Activated T-helper 1 cell treated with anti-CD3 and anti-CD28 coated beads, Interleukin-12 subunit alpha, Interleukin-12 subunit beta, Interleukin-2, Interleukin-4 antibody, amounts not matched to agents 30 ng/mL and 10 ng/mL and 1 ng/mL, durations not matched to agents 14 hours and 24 hours and 36 hours (primary cell): ENCODE measurements at regions of chr1 and their contacts with region 1.

Region 1: GRCh38 chr1:205255941-205256780 is 28.4 kb downstream of the TMCC2 start:
- DNase-seq: peak; percentile 74
- H3K4me3 Mint-ChIP-seq: no peak overlapping the region
- H3K27ac Mint-ChIP-seq: no peak overlapping the region
- H3K4me1 Mint-ChIP-seq: peaks cover 25% of the 10 kb centered on the region
- H3K27me3 Mint-ChIP-seq: no peaks in the 10 kb centered on the region

Region 2: DNA sequence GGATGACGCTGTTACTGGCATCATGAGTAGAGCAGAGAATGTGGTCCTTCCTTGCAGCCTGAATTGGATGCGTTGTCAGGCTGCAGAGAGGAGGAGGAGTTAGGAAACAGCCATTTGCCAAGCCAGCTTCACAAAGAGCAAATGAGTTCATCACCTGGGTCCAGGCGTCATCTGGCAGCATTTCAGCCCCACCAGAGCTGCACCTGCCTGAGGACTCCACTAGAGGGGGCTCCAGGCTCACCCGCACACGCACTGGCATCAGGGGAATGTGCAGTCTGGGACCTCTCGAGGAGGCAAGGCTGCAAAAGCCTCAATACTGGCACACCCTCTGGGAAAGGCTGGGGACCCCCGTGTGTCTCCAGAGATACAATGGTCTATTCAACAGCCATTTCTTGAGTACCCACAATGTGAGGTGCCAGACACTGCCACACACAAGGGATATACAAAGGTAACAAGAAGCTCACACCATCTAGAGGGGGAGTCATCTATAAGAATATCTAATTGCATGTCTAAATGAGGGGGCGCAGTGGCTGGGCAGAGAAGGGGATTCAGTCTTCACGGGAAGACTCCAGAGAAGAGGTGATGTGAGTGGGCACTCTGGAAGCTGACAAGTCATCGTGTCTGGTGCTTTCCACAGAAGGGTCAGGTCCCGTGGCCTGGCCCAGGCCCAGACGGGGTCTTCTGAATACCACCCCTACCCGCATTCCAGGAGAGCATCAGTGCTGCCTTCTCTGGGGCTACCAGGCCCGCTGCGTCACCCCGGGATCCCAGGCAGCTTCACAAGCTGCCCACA is 266.7 kb before region 1 on chr1:
- intact Hi-C with region 1: loop called (anchors 1 kb)
- DNase-seq: peak; percentile 44
- H3K4me3 Mint-ChIP-seq: no peak overlapping the region
- H3K27ac Mint-ChIP-seq: no peak overlapping the region
- H3K4me1 Mint-ChIP-seq: peaks cover 11% of the 10 kb centered on the region
- H3K27me3 Mint-ChIP-seq: peaks cover 2% of the 10 kb centered on the region

Region 3: DNA sequence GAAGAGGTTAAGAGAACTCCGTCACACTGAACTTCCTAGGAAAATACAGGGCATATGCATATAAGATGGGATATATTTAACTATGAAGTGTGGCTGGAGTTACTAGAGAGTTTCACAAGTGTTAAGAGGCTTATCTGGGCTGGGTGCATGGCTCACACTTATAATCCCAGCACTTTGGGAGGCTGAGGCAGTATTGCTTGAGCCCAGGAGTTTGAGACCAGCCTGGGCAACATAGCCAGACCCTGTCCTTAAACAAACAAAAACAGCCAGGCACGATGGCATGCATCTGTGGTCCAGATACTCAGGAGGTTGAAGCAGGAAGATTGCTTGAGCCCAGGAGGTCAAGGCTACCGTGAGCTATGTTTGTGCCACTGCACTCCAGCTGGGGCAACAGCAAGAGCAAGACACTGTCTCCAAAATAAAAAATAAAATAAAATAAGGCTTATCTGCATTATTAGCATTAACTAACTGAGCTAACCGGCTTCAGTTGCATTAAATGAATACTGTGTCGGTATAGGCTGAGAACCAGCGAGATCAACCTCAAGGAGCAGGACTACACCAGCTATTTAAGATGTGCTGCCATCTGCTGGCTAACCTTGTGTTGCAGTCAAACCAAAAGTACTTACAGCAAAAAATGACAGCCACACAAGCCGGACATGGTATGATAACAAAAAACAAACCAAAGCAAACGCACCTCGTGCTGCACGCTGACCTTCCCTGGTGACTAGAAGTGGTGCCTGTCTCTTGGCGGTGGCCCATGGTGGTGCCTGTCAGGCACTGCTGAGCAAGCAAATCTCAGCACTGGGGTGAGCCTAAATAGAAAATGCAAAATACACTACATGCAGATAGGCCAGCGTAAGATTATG is 114.7 kb before region 1 on chr1:
- intact Hi-C with region 1: loop called (anchors 1 kb)
- DNase-seq: peak; percentile 59
- H3K4me3 Mint-ChIP-seq: no peak overlapping the region
- H3K27ac Mint-ChIP-seq: no peak overlapping the region
- H3K4me1 Mint-ChIP-seq: peaks cover 9% of the 10 kb centered on the region
- H3K27me3 Mint-ChIP-seq: no peaks in the 10 kb centered on the region

Region 4: GRCh38 chr1:205211169-205211838 is 44.9 kb before region 1 on chr1 and contains the start of gene DSTYK:
- intact Hi-C with region 1: loop called (anchors 5 kb)
- DNase-seq: peak; percentile 89
- H3K4me3 Mint-ChIP-seq: peak within 1 kb of the TSS; percentile 99
- H3K27ac Mint-ChIP-seq: peak within 1 kb of the TSS; percentile 94
- H3K4me1 Mint-ChIP-seq: peaks cover 49% of the 10 kb centered on the region
- H3K27me3 Mint-ChIP-seq: no peaks in the 10 kb centered on the region
- total RNA-seq, gene DSTYK: 34.2 and 35.9 TPM in 2 replicates

Region 5: DNA sequence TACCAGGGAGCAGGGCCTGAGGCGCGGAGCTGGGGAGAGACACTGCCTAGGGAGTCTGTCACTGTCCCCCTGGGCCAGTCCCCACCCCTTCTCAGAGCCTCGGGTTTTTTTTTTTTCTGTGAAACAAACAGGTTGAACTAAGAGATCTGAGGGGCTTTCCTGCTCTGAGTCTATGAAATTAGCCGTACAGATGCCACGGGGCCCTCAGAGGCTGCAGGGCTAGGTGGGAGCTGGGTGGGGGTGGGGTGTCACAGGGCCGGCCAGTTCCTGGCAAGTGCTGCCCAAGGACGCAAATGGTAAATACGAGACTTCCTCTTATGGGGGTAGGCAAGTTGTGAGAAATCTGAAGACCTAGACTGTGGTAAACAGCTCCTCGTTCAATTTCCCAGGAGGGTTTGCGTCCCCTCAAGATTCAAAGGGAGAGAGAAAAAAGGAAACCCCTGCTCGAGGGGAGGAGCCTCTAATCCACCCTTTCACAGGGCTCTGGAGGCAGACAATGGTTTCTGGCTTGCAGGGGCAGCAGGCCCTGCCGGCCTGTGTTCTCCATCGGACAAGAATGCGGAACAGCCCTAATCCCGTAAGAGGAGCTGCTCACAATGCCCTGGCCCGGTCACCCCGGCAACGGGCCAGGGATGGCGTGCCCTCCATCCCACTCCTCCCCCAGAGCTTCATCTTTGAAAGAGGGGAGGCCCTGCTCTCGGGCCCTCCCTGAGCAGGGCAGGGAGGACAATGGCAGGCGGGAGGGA is 57.6 kb after region 1 on chr1:
- intact Hi-C with region 1: no loop called
- DNase-seq: peak; percentile 21
- H3K4me3 Mint-ChIP-seq: peak overlapping the region; percentile 83
- H3K27ac Mint-ChIP-seq: peak overlapping the region; percentile 94
- H3K4me1 Mint-ChIP-seq: peaks cover 84% of the 10 kb centered on the region
- H3K27me3 Mint-ChIP-seq: no peaks in the 10 kb centered on the region